ENCODE measurements at regions of chr10 and their contacts with region 1.

Region 1: DNA sequence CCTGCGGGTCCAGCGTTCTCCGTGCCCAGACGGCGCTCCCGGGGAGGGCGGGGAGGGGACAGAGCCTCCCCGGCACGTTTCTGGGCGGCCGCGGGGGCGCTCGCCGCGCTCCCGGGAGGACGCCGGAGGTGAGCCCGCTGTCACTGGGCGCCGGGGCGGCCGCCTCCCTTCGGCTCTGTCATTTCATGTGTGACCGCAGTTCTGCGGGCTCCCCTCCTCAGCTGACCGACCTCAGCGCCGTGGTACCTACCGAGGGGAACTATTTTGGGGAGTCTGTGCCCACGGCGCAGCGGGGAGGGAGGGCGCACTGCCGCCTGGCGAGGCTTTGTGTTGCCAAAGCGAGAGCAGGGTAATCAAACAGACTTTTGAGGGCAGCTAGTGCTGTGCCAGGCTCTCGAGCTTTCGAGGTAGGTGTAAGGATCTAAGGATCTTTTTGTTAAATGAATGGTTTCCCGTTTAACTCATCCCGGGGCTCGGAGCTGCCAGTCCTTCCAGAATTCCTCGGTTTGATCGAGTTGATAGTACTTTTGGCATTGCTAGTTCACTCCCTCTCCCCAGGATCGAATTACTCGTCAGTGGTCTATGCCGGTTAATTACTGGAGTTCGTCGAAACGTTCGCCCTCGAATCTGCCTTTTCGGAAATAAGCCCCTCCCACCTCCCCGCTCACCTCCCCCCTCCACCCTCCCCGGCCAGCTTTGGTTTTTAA is 1.9 kb downstream of the ARID5B start:
- DNase-seq: peak; percentile 75 to 88
- ATAC-seq: peak; percentile 80
- H3K4me3 ChIP-seq: peak overlapping the region; percentile 90 to 95
- H3K27ac ChIP-seq: peak overlapping the region; percentile 79 to 99
- H3K4me1 ChIP-seq: peaks cover 2 to 3% of the 10 kb centered on the region in 2 donors
- H3K27me3 ChIP-seq: no peaks in the 10 kb centered on the region

Region 2: GRCh38 chr10:61750929-61751471 is 152.4 kb before region 1 on chr10:
- intact Hi-C with region 1: loop called in 1 of 2 experiments (anchors 5 kb)
- DNase-seq: peak; percentile 71 to 78
- ATAC-seq: peak; percentile 77
- H3K4me3 ChIP-seq: no peak overlapping the region
- H3K27ac ChIP-seq: peak overlapping the region in 1 of 2 donors; percentile 21
- H3K4me1 ChIP-seq: peaks cover 3 to 13% of the 10 kb centered on the region in 2 donors
- H3K27me3 ChIP-seq: no peaks in the 10 kb centered on the region

Region 3: DNA sequence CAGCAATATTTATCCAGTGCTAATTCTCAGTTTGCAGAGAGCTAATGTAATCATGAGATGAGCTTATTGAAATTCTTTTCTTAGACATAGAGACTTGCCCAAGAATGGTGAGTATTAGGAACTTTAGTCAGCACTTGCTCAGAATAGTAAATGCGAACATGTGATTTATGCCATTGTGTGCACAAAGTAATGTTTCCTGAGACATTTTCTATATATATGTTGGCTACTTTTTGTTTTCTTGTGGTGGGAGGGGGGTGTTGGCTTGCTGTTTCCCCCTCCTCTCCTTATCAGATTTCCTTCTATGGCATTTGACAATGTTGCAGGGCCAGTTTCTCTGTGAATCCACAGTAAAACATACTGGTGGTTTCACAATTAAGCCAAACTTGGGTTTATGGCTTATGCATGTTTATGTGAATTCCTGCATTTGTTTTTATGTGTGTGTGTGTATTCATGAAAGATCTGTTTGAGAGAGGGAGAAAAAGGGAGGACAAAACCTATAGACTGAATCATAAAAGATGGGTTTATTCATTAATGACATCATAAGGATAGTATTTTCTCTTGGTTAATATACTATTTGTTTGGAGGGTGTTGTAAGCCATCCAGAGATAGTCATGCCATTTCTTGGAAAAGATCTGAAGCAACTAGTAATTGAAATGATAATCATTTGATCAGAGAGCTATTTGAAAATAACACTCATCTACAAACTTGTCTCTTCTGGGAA is 34.4 kb after region 1 on chr10:
- intact Hi-C with region 1: loop called (anchors 2 to 5 kb)
- DNase-seq: no peak
- ATAC-seq: peak; percentile 64
- H3K4me3 ChIP-seq: peak overlapping the region in 1 of 2 donors; percentile 34
- H3K27ac ChIP-seq: peak overlapping the region in 1 of 2 donors; percentile 59
- H3K4me1 ChIP-seq: peaks cover 2 to 11% of the 10 kb centered on the region in 2 donors
- H3K27me3 ChIP-seq: no peaks in the 10 kb centered on the region

Region 4: GRCh38 chr10:61970182-61971002 is 67.0 kb after region 1 on chr10:
- intact Hi-C with region 1: no loop called
- DNase-seq: no peak
- ATAC-seq: no peak
- H3K4me3 ChIP-seq: no peak overlapping the region
- H3K27ac ChIP-seq: no peak overlapping the region
- H3K4me1 ChIP-seq: peaks cover 1 to 8% of the 10 kb centered on the region in 2 donors
- H3K27me3 ChIP-seq: no peaks in the 10 kb centered on the region

Region 5: GRCh38 chr10:61992671-61993668 is 89.6 kb after region 1 on chr10:
- intact Hi-C with region 1: loop called (anchors 5 kb)
- DNase-seq: peak in 1 of 2 donors; percentile 73
- ATAC-seq: peak; percentile 92
- H3K4me3 ChIP-seq: peak overlapping the region in 1 of 2 donors; percentile 41
- H3K27ac ChIP-seq: peak overlapping the region; percentile 82 to 85
- H3K4me1 ChIP-seq: peaks cover 6% of the 10 kb centered on the region in 2 donors
- H3K27me3 ChIP-seq: no peaks in the 10 kb centered on the region

Region 6: GRCh38 chr10:62082729-62083411 is 179.5 kb after region 1 on chr10:
- intact Hi-C with region 1: loop called in 1 of 2 experiments (anchors 5 kb)
- DNase-seq: no peak
- ATAC-seq: peak; percentile 65
- H3K4me3 ChIP-seq: peak overlapping the region in 1 of 2 donors; percentile 18
- H3K27ac ChIP-seq: peak overlapping the region; percentile 61 to 100
- H3K4me1 ChIP-seq: peaks cover 3 to 16% of the 10 kb centered on the region in 2 donors
- H3K27me3 ChIP-seq: no peaks in the 10 kb centered on the region

Measured in aorta (tissue), 5 donors.